Caco-2 (cell line): ENCODE measurements at regions of chr6 and their contacts with region 1.

Region 1: GRCh38 chr6:127302728-127303660 is 36.3 kb downstream of the RNF146 start:
- DNase-seq: peak in 1 of 2 experiments; percentile 34
- H3K4me3 ChIP-seq: no peak overlapping the region
- H3K4me3 Mint-ChIP-seq: no peak overlapping the region
- H3K27ac Mint-ChIP-seq: no peak overlapping the region
- H3K4me1 ChIP-seq: no peaks in the 10 kb centered on the region
- H3K4me1 Mint-ChIP-seq: peaks cover 6% of the 10 kb centered on the region
- H3K27me3 ChIP-seq: no peaks in the 10 kb centered on the region
- H3K27me3 Mint-ChIP-seq: no peaks in the 10 kb centered on the region
- CTCF ChIP-seq: peak; percentile 56 to 76

Region 2: DNA sequence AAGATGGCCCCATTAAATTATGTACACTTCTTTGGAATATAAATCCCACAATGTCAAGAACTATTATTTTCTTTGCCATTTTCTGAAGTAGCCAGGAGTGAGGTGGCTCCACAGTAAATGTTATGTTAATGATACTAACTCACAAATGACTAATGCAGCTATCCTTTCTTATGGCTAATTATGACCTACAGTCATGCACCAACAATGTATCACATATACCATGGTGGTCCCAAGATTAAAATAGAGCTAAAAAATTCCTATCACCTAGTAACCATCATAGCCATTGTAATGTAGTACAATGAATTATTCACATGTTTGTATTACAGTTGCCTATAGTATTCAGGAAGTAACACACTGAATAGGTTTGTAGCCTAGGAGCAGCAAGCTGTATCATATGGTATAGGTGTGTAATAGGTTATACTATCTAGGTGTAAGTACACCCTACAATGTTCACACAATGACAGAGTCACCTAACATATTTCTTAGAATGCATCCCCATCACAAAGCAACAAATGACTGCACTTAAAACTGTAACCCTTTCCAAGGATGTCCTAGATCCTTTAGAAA is 25.1 kb after region 1 on chr6:
- CTCF ChIA-PET with region 1: no interaction called
- POLR2A ChIA-PET with region 1: no interaction called
- intact Hi-C with region 1: no loop called
- DNase-seq: no peak
- H3K4me3 ChIP-seq: no peak overlapping the region
- H3K4me3 Mint-ChIP-seq: no peak overlapping the region
- H3K27ac Mint-ChIP-seq: no peak overlapping the region
- H3K4me1 ChIP-seq: peaks cover 13% of the 10 kb centered on the region
- H3K4me1 Mint-ChIP-seq: peaks cover 16% of the 10 kb centered on the region
- H3K27me3 ChIP-seq: no peaks in the 10 kb centered on the region
- H3K27me3 Mint-ChIP-seq: no peaks in the 10 kb centered on the region
- CTCF ChIP-seq: no peak

Region 3: DNA sequence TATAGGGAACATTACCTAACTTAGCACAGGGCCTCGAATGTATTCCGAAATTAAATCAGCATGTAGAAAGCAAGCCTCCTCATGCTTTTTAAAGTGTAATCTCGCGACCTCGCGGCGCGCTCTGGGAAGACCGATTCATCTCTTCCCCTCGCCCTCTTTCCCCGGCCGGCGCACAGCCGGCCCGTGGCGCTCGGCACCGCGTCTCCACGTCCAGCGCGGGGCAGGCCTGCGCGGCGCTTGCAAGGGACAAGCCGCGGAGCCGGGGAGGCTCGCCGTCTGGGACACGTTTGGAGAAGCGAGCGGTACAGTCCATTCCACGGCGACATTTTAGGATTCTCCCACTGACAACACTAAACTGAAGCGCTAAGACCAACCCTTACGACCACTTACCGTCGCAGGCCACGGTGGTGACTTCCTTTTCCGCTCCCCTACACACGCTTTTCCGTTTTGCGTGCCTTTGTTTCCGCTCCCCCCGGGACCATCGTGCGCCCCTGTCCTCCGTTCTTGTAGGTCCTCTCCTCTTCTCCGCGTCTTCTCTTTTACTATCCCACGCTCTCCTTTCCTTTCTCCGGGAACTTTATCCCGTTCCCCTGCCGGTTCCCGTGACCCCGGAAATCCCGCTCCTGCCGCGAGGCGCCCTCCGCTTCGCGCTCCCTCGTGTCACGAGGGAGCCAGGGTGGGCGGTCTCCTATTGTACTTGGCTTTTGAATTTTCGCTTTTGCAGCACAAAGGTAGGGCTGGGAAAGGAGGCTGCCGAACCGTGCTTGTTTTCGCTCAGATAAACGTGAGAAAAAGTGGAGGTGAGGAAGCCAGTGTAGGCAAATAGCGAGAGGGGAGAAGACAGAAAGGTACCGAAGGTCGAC is 40.2 kb after region 1 on chr6 and contains the start of gene ECHDC1:
- CTCF ChIA-PET with region 1: no interaction called
- POLR2A ChIA-PET with region 1: interaction called, 3 read pairs
- intact Hi-C with region 1: loop called (anchors 2 kb)
- DNase-seq: peak; percentile 59 to 65
- H3K4me3 ChIP-seq: peak within 1 kb of the TSS; percentile 58
- H3K4me3 Mint-ChIP-seq: no peak within 1 kb of the TSS
- H3K27ac Mint-ChIP-seq: no peak within 1 kb of the TSS
- H3K4me1 ChIP-seq: peaks cover 46% of the 10 kb centered on the region
- H3K4me1 Mint-ChIP-seq: peaks cover 14% of the 10 kb centered on the region
- H3K27me3 ChIP-seq: no peaks in the 10 kb centered on the region
- H3K27me3 Mint-ChIP-seq: no peaks in the 10 kb centered on the region
- CTCF ChIP-seq: no peak
- total RNA-seq, gene ECHDC1: 72.7 and 77.5 TPM in 2 replicates

Region 4: DNA sequence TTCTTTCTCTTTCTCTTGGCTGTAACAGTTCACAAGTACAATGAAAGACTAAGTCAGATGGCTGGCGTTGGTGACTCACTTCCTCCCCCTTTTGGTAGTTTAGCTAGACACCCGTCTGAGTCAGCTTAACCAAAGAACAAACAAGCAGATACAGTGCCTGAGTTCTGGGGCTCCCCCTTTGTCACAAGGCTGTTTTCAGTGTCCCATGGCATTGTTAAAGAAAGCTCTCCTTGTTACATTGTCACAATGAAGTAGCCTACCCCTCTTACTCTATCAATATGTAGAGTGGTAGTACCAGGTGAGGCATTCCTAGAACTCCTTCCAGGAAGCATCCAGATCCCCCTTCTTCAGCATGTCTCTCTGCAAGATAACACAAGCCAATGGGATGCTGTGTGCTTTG is 117.6 kb after region 1 on chr6:
- CTCF ChIA-PET with region 1: interaction called, 5 read pairs
- POLR2A ChIA-PET with region 1: no interaction called
- intact Hi-C with region 1: loop called (anchors 1 kb)
- DNase-seq: peak; percentile 49 to 62
- H3K4me3 ChIP-seq: no peak overlapping the region
- H3K4me3 Mint-ChIP-seq: no peak overlapping the region
- H3K27ac Mint-ChIP-seq: no peak overlapping the region
- H3K4me1 ChIP-seq: no peaks in the 10 kb centered on the region
- H3K4me1 Mint-ChIP-seq: no peaks in the 10 kb centered on the region
- H3K27me3 ChIP-seq: no peaks in the 10 kb centered on the region
- H3K27me3 Mint-ChIP-seq: no peaks in the 10 kb centered on the region
- CTCF ChIP-seq: peak; percentile 41 to 66

Region 5: DNA sequence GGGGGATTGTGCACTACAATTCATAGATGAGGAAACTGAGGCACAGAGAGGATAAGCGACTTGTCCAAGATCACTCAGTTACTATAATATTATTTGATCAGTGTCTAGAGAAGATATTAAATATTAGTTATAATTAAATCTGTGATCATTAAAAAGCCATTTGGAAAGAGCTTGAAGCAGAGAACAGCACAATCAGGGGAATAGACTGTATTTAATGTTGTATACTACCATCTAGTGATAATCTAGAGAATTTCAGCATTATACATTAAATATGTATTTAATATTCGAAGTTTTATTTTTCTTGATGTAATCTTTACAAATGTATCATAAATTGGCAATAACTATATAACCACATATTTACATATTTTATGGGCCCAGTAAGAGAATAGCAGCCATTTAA is 236.3 kb after region 1 on chr6:
- CTCF ChIA-PET with region 1: no interaction called
- POLR2A ChIA-PET with region 1: no interaction called
- intact Hi-C with region 1: loop called (anchors 5 kb)
- DNase-seq: no peak
- H3K4me3 ChIP-seq: no peak overlapping the region
- H3K4me3 Mint-ChIP-seq: no peak overlapping the region
- H3K27ac Mint-ChIP-seq: no peak overlapping the region
- H3K4me1 ChIP-seq: no peaks in the 10 kb centered on the region
- H3K4me1 Mint-ChIP-seq: no peaks in the 10 kb centered on the region
- H3K27me3 ChIP-seq: no peaks in the 10 kb centered on the region
- H3K27me3 Mint-ChIP-seq: peaks cover 2% of the 10 kb centered on the region
- CTCF ChIP-seq: no peak